Lower leg skin (tissue), 4 donors: ENCODE measurements at regions of chr18 and their contacts with region 1.

Region 1: GRCh38 chr18:48675352-48675761 is 136.5 kb downstream of the CTIF start:
- DNase-seq: peak; percentile 76 to 97
- H3K4me3 ChIP-seq: no peak overlapping the region
- CTCF ChIP-seq: peak in 2 of 3 donors; percentile 23 to 90
- POLR2A ChIP-seq: no peak

Region 2: DNA sequence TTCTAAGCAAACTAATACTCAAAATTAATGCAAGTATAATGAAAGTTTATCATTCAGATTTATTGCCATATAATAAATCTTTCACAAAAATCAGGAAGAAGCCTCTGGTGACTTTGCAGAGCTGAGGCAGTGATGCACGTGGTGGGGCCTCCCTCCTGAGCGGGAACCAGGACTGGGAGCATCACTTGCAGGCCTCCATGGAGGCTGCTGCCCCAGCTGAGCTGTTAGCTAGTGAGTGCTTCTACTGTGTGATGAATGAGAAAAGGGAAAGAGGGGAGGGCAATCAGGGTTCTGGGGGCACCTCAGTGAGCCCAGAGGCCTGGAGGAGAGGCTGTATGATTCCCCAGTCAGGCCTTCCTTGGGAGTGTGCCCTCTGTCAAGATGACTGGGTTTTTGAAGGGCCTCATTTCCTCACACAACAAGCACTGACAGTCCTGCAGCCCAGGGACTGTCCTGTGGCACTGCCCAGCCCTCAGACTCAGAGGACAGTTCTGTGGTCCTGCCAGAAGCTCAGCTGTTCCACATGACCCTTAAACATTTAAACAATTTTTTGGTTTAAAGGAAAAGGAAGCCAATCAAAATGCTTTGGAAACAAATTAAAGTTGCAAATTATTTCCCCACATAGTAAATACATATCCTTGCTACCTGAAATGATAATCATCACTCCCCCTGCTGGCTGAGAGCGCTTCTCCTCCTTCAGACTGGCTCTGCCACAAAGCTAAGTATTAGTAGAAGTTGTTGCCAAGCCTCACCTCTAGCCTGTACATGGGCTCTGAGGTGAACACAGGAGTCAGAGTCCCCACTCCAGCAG is 366.3 kb after region 1 on chr18:
- intact Hi-C with region 1: loop called (anchors 5 kb)
- DNase-seq: no peak
- H3K4me3 ChIP-seq: no peak overlapping the region
- CTCF ChIP-seq: no peak
- POLR2A ChIP-seq: no peak

Region 3: GRCh38 chr18:49412679-49413078 is 737.3 kb after region 1 on chr18:
- intact Hi-C with region 1: loop called (anchors 10 kb)
- DNase-seq: no peak
- H3K4me3 ChIP-seq: no peak overlapping the region
- CTCF ChIP-seq: no peak
- POLR2A ChIP-seq: no peak

Region 4: DNA sequence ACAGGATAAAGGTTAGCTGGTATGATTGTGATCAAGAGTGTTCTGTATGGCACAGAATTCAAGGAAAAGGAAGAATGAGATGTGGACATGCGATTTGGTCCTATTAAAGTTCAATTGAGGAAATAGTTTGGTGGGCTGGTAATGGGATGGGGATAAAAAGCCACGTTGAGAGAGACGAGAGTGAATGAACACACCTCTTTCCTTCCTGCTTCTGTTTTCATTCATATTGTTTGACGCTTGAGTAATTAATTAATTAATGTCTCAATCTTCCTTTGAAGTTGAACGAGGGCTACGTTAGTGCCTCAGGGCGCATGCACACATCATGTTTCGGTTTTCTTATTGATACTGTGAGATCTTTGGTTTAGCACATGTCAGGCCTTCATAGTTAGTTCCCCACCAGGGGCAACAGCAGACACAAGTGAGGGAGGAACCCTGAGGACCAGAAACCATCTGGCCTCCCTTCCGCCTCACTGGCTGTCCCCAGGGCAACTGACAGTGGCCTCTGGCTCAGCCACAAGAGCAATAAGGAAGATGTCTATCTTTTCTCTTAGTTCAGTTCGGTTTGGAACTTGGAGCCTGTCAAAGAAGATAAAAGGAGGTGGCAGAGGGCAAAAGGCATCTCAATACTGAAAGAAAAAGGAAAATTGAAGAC is 1002.5 kb after region 1 on chr18:
- intact Hi-C with region 1: no loop called
- DNase-seq: no peak
- H3K4me3 ChIP-seq: no peak overlapping the region
- CTCF ChIP-seq: no peak
- POLR2A ChIP-seq: no peak